AG04449 (cell line): ENCODE measurements at regions of chrX and their contacts with region 1.

Region 1: DNA sequence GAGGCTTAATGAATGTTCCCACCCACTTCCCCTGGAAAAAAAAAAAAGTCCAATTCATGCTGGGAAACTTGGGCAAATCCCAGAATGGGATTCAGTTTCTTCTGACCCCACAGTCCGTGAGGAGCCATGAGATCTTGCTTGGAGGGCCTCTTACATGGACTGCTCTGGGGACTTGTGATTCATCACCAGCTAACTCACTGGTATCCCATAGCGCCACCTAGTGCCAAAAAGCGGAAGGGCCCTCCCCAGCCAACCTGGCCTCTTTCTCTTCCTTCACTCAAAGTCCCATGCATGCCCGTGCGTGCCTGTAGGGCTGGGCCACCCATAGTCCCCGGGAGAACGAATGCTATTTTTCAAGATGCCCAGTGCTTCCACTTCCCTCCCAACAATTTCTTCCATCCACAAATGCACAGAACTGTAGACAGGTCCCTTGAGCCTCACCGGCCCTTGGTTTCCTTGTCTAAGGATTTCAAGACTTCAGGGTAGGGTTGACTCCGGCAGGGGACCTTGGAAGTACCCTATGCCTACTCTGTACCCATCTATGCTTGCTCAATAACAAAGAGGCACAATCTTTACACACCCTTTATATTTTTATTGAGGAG is 5.1 kb downstream of the RTL5 start:
- DNase-seq: peak; percentile 40
- H3K4me3 ChIP-seq: no peak overlapping the region
- CTCF ChIP-seq: peak; percentile 77

Region 2: DNA sequence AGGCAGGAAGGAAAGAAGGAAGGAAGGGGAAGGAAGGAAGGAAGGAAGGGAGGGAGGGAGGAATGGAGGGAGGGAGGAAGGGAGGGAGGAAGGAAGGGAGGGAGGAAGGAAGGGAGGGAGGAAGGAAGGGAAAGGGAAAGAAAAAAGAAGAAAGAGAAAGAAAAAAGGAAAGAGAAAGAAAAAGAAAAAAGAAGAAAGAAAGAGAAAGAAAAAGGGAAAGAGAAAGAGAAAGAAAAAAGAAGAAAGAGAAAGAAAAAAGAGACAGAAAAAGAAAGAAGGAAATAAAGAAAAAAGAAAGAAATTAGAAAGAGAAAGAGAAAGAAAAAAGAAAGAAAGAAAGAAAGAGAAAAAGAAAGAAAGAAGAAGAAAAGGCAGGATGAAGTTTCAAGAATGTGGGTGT is 231.0 kb before region 1 on chrX:
- CTCF ChIA-PET with region 1: no interaction called
- POLR2A ChIA-PET with region 1: no interaction called
- DNase-seq: no peak
- H3K4me3 ChIP-seq: no peak overlapping the region
- CTCF ChIP-seq: no peak

Region 3: DNA sequence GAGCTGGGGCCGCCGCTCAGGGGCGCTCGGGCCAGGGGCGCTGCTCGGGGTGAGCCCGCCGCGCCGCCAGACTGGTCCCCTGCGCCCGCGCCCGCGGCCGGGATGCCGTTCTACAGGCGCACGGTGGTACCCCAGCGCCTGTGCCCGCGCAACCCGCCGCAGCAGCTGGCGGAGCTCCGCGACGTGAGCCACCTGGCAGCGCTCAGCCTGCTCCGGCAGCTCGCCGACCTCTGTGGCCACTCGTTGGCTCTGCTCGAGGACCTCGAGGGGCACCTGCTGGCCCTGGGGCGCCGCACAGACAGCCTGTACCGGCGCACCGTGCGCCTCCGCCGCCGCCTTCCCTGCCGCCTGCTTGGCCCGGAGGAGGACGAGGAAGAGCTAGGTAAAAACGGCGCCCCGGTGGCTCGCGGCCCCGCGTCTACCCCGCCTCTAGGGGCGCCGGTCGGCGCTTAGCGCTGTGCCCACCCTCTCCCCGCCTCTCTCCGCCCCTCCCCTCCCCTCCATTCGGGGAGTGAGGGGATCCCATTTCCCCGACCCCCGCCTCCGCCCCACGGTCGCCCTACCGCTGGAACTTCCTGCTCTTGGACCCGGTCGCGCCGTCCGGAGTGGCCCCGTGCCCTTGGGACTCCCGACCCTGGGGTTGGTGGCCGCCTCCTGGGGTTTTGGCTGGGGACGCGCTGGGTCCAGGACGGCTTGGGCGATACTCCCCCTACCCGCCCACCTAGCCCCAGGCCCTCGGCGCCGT is 215.5 kb before region 1 on chrX:
- CTCF ChIA-PET with region 1: interaction called, 12 read pairs
- POLR2A ChIA-PET with region 1: no interaction called
- DNase-seq: no peak
- H3K4me3 ChIP-seq: peak overlapping the region; percentile 44
- CTCF ChIP-seq: peak; percentile 13

Region 4: GRCh38 chrX:72029483-72030411 is 96.9 kb before region 1 on chrX:
- CTCF ChIA-PET with region 1: interaction called, 155 read pairs
- POLR2A ChIA-PET with region 1: interaction called, 4 read pairs
- DNase-seq: peak; percentile 56
- H3K4me3 ChIP-seq: peak overlapping the region; percentile 61
- CTCF ChIP-seq: no peak

Region 5: DNA sequence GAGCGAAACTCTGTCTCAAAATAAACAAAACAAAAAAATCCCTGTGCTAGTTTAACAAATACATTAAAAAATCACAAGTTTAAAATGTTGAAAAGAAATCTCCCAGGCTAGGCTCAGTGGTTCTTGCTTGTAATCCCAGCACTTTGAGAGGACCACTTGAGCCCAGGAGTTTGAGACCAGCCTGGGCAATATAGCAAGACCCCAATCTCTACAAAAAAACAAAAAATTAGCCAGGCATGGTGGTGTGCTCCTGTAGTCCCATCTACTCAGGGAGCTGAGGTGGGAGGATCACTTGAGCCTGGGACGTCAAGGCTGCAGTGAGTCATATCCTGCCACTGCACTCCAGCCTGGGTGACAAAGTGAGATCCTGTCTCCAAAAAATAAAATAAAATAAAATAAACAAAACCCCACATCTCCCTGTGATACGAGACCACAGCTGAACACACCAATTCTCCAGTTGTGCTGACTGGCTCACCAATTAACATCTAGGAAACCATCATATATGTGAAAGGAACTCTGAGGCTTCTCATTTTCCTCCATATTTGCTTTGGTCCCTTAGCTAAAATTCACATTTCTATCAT is 143.1 kb after region 1 on chrX:
- CTCF ChIA-PET with region 1: no interaction called
- POLR2A ChIA-PET with region 1: no interaction called
- DNase-seq: no peak
- H3K4me3 ChIP-seq: no peak overlapping the region
- CTCF ChIP-seq: no peak

Region 6: DNA sequence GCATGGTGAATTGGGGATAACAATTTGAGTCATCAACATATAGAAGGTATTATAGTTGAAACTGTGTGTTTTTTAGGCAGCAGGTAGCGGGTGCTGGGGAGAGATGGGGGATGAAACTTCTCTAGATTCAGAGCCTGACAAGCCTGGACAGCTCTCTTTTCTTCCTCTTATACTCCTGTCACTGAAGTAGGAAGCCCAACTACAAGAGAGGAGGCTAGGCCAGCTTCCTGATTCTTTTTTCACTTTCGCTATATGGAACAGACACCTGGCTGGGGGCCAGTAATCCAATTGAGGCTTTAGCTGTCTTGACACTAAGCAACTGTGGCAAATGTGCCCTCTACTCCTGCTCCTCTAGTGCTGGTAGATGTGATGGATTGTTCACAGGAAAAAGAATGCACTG is 518.3 kb after region 1 on chrX:
- CTCF ChIA-PET with region 1: no interaction called
- POLR2A ChIA-PET with region 1: no interaction called
- DNase-seq: no peak
- H3K4me3 ChIP-seq: no peak overlapping the region
- CTCF ChIP-seq: no peak